Panc1 (cell line): ENCODE measurements at regions of chr16 and their contacts with region 1.

Region 1: DNA sequence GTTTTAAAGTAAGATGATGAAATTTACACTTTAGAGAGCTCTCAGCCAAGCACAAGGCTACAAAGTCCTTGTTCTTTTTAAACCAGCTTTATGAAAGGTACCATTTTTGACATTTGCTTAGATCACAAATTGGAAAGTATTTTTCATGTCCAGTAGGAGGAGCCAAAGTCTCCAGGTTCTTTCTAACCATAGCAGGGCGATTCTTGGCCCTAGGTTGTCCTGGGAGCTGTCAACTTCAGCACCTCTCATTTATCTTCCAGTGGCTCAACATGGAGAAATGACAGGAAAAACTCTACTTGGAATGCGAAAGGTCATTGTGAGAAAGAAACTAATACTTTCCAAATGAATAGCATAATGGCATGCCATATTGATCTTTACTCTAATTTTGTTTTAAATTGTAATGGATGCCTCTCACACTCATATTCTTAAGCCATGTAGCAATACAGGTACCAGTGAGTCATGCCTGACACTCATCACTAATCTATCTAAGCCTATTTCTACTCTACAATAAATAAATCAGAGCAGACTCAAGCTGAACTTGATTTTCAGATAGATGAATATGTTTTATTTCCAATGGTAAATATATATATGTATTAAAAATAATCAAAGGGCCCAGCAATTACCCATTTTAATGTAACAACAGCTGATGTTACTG is 919.1 kb upstream of the EEF2KMT start:
- DNase-seq: no peak
- ATAC-seq: no peak
- H3K4me3 ChIP-seq: no peak overlapping the region
- H3K27ac ChIP-seq: no peak overlapping the region
- H3K4me1 ChIP-seq: no peaks in the 10 kb centered on the region
- H3K27me3 ChIP-seq: no peaks in the 10 kb centered on the region; the same call in 1 of the 2 replicates
- CTCF ChIP-seq: peak; percentile 58

Region 2: DNA sequence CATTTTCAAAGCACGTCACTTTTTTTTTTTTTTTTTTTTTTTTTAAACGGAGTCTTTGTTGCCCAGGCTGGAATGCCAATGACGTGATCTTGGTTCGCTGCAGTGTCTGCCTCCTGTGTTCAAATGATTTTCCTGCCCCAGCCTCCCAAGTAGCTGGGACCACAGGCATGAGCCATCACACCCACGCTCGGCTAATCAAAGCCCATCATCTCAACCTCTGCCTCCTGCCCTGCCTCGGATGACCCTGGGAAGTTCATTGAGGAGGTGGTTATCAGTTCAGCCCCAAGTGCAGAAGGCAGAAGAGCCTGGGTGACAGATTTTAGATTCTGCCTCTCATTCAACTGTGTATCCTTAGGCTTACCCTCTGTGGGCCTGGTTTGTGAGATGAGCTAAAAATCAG is 434.1 kb before region 1 on chr16:
- CTCF ChIA-PET with region 1: interaction called, 18 read pairs
- POLR2A ChIA-PET with region 1: no interaction called
- in situ Hi-C with region 1: no loop called
- intact Hi-C with region 1: no loop called
- DNase-seq: no peak
- ATAC-seq: no peak
- H3K4me3 ChIP-seq: no peak overlapping the region
- H3K27ac ChIP-seq: no peak overlapping the region
- H3K4me1 ChIP-seq: no peaks in the 10 kb centered on the region
- H3K27me3 ChIP-seq: no peaks in the 10 kb centered on the region
- CTCF ChIP-seq: no peak

Region 3: DNA sequence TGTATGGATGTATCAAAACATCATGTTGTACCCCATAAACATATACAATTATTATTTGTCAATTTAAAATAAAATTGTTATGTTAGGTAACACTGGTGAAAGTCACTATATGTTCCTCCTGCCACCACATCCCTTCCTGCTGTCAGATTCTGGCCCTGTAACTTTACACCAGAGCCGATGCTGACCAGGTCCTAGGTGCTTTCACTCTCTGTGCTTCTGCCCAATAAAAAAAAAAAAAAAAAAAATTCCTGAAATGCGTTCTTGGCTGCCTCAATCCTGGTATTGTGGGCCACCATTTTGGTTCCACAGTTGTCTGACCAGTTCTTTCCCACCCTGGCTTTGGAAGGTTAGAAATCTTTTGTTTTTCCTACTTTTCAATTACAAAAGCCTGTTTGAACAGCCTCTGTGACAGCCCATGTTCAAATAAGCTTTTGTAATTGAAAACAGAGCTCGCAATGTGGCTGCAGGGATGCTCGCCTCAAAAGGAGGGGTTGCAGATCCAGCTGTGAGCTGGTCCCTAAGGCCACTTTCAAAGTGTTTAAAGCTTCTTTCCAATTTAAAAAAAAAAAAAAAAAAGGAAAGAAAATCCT is 88.1 kb before region 1 on chr16:
- CTCF ChIA-PET with region 1: no interaction called
- POLR2A ChIA-PET with region 1: no interaction called
- in situ Hi-C with region 1: no loop called
- intact Hi-C with region 1: no loop called
- DNase-seq: no peak
- ATAC-seq: no peak
- H3K4me3 ChIP-seq: no peak overlapping the region
- H3K27ac ChIP-seq: no peak overlapping the region
- H3K4me1 ChIP-seq: no peaks in the 10 kb centered on the region
- H3K27me3 ChIP-seq: no peaks in the 10 kb centered on the region
- CTCF ChIP-seq: no peak

Region 4: DNA sequence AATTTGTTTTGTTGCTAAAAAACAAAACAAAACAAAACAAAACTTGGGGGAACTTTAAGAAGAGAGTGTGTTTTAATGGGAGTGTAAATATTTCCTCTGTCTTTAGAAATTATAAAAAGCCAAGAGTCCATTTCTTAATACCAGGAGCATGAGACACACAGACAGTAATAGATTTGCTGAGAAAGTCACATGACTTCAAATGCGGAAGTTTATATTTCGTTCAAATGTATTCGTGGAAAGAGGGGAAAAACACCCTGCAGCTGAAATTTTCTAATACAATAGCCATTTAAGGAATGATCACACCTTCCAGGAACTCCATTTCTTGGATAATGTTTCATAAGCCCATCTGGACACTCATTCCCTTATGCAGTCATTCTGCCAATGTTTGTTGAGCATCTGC is 11.7 kb before region 1 on chr16:
- CTCF ChIA-PET with region 1: no interaction called
- POLR2A ChIA-PET with region 1: no interaction called
- in situ Hi-C with region 1: no loop called
- intact Hi-C with region 1: no loop called
- DNase-seq: no peak
- ATAC-seq: no peak
- H3K4me3 ChIP-seq: no peak overlapping the region
- H3K27ac ChIP-seq: no peak overlapping the region
- H3K4me1 ChIP-seq: no peaks in the 10 kb centered on the region
- H3K27me3 ChIP-seq: no peaks in the 10 kb centered on the region
- CTCF ChIP-seq: no peak

Region 5: GRCh38 chr16:6165330-6165979 is 148.8 kb after region 1 on chr16:
- CTCF ChIA-PET with region 1: interaction called, 3 read pairs
- POLR2A ChIA-PET with region 1: no interaction called
- in situ Hi-C with region 1: no loop called
- intact Hi-C with region 1: loop called (anchors 10 kb)
- DNase-seq: no peak
- ATAC-seq: no peak
- H3K4me3 ChIP-seq: no peak overlapping the region
- H3K27ac ChIP-seq: no peak overlapping the region
- H3K4me1 ChIP-seq: no peaks in the 10 kb centered on the region
- H3K27me3 ChIP-seq: no peaks in the 10 kb centered on the region
- CTCF ChIP-seq: peak; percentile 33; the same call in 1 of the 2 replicates

Region 6: DNA sequence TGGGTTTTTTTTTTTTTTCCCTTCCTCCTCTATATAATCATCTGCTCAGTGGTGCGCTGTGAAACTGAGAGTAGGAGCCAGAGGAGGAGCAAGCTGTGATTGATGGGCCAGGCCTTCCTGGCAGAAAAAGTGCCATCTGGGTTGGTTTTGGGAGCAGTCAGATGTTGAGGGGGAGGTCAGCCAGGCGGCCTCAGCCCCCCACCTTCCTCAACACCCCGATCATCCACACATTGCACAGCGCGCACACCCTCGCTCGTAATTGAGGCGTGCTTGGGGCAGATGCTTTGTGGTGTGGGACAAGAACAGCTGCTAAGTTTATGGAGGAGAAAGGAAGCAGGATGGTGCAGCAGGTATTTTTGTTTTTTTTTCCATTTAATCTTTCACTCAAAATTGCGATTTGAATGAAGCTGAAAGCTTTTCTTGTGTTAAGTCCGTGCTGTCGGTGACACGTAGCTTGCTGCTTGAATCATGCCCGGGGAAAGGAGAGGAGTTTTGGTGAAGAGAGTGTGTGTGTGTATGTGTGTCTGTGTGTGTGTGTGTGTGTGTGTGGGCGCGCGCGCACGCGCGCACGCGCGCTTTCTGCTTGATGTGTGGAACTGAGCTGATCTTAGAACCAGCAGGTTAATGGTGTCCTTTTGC is 1493.4 kb after region 1 on chr16:
- CTCF ChIA-PET with region 1: no interaction called
- POLR2A ChIA-PET with region 1: no interaction called
- in situ Hi-C with region 1: no loop called
- intact Hi-C with region 1: no loop called
- DNase-seq: no peak
- ATAC-seq: no peak
- H3K4me3 ChIP-seq: no peak overlapping the region
- H3K27ac ChIP-seq: no peak overlapping the region
- H3K4me1 ChIP-seq: no peaks in the 10 kb centered on the region
- H3K27me3 ChIP-seq: no peaks in the 10 kb centered on the region
- CTCF ChIP-seq: no peak